Endothelial cell of umbilical vein (primary cell): ENCODE measurements at regions of chr2 and their contacts with region 1.

Region 1: GRCh38 chr2:42360890-42361727 is at the start of gene COX7A2L:
- DNase-seq: peak; percentile 97
- H3K4me3 ChIP-seq: peak within 1 kb of the TSS; percentile 61 to 92 (median 77)
- H3K27ac ChIP-seq: peak within 1 kb of the TSS; percentile 97
- H3K4me1 ChIP-seq: peaks cover 18% of the 10 kb centered on the region
- H3K27me3 ChIP-seq: peaks cover 1 to 2% of the 10 kb centered on the region in 2 experiments
- CTCF ChIP-seq: peak in 1 of 2 donors; percentile 33
- POLR2A ChIP-seq: peak; percentile 73
- total RNA-seq, gene COX7A2L: 94.2 and 101 TPM in 2 replicates

Region 2: GRCh38 chr2:42025151-42025582 is 335.9 kb before region 1 on chr2:
- CTCF ChIA-PET with region 1: no interaction called
- POLR2A ChIA-PET with region 1: no interaction called
- dilution Hi-C with region 1: no loop called
- intact Hi-C with region 1: no loop called
- DNase-seq: peak; percentile 79
- H3K4me3 ChIP-seq: no peak overlapping the region
- H3K27ac ChIP-seq: peak overlapping the region; percentile 7
- H3K4me1 ChIP-seq: peaks cover 16% of the 10 kb centered on the region
- H3K27me3 ChIP-seq: no peaks in the 10 kb centered on the region
- CTCF ChIP-seq: no peak
- POLR2A ChIP-seq: no peak

Region 3: GRCh38 chr2:42147641-42148274 is 213.4 kb before region 1 on chr2:
- CTCF ChIA-PET with region 1: no interaction called
- POLR2A ChIA-PET with region 1: no interaction called
- dilution Hi-C with region 1: no loop called
- intact Hi-C with region 1: no loop called
- DNase-seq: peak; percentile 24
- H3K4me3 ChIP-seq: no peak overlapping the region
- H3K27ac ChIP-seq: no peak overlapping the region
- H3K4me1 ChIP-seq: peaks cover under 1% of the 10 kb centered on the region
- H3K27me3 ChIP-seq: peaks cover 0 to 3% of the 10 kb centered on the region in 2 experiments
- CTCF ChIP-seq: no peak
- POLR2A ChIP-seq: no peak

Region 4: DNA sequence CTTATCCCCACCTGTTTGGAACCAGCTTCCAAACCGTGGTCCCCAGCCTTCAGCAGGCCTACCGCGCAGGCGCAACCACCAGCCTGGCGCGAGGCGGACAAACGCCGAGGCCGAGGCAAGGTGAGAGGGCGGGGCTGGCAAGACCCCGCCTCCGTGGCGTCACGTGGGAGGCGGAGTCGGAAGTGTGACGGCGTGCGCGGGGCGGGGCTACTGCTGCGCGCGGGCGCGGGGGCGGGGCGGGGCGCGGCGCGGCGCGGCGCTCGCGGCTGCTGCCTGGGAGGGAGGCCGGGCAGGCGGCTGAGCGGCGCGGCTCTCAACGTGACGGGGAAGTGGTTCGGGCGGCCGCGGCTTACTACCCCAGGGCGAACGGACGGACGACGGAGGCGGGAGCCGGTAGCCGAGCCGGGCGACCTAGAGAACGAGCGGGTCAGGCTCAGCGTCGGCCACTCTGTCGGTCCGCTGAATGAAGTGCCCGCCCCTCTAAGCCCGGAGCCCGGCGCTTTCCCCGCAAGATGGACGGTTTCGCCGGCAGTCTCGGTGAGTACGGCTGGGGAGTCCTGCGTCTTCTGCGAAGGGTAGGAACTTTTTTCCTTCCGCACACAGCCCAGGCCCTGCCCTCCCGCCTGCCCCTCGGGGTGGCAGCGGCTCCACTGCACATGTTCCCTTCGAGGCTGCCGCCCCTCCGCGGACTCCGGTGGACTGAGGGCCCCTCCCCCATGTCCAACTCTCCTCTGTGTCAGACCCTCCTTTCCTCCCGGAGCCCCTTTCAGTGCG is 191.8 kb before region 1 on chr2 and contains the start of gene EML4:
- CTCF ChIA-PET with region 1: no interaction called
- POLR2A ChIA-PET with region 1: no interaction called
- dilution Hi-C with region 1: no loop called
- intact Hi-C with region 1: loop called (anchors 2 kb)
- DNase-seq: peak; percentile 84
- H3K4me3 ChIP-seq: peak within 1 kb of the TSS; percentile 72 to 76 (median 75)
- H3K27ac ChIP-seq: peak within 1 kb of the TSS; percentile 78
- H3K4me1 ChIP-seq: peaks cover 7% of the 10 kb centered on the region
- H3K27me3 ChIP-seq: peaks cover 6 to 7% of the 10 kb centered on the region in 2 experiments
- CTCF ChIP-seq: no peak
- POLR2A ChIP-seq: peak; percentile 80
- total RNA-seq, gene EML4: 30.8 and 32.0 TPM in 2 replicates